A673 (cell line): ENCODE measurements at regions of chr19 and their contacts with region 1.

Region 1: DNA sequence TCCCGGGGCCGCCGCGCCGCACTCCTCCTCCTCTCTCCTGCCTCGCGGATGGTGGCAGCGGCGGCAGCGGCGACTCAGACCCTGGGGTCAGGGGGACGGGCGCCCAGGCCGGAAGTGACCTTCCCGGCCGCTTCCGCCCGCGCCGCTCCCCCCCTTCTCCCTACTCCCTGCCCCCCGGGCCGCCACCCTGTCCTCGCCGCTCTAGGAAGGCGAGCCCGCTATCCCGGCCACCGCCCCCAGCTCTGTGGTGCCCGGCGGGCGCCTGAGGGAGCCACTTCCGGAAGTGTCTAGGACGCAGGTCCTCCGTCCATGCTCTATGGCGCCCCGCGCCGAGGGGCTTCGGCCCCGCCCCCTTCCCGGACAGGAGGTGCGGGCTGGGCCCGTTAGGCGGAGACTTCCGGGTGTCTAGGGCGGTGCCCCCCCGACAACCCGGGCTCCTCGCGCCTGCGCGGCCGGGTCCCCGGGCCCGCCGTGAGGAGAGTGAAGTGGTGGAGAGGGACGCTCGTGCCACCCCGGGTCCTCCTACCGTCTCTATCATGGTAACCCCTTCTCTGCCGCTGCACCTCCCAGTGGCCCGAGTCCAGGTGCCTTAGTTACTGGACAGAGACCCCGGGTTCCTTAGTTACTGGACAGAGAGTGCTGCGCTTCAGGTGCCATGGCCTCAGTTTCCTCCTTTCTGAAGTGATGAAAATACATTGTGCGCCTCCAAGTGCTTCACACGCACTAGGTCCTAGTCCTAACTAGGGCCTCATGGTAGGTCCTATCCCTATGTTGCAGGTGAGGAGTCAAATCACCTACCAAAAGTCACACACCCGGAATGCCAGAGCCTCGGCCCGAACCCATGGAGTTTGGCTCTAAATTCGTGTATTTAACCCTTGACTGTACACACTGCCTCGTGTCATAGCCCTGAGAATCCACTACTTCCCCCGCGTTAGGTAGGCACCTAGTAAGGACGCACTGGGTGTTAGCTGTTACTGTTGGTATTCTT is at the start of gene ZNF787:
- DNase-seq: peak; percentile 99
- H3K4me3 ChIP-seq: peak within 1 kb of the TSS; percentile 97
- H3K27ac ChIP-seq: peak within 1 kb of the TSS; percentile 98
- H3K4me1 ChIP-seq: peaks cover 10% of the 10 kb centered on the region
- H3K27me3 ChIP-seq: no peaks in the 10 kb centered on the region
- CTCF ChIP-seq: no peak
- total RNA-seq, gene ZNF787: 48.6 and 51.0 TPM in 2 replicates

Region 2: GRCh38 chr19:55503502-55504251 is 617.8 kb before region 1 on chr19:
- CTCF ChIA-PET with region 1: no interaction called
- POLR2A ChIA-PET with region 1: no interaction called
- intact Hi-C with region 1: no loop called
- DNase-seq: peak; percentile 90
- H3K4me3 ChIP-seq: no peak overlapping the region
- H3K27ac ChIP-seq: no peak overlapping the region
- H3K4me1 ChIP-seq: no peaks in the 10 kb centered on the region
- H3K27me3 ChIP-seq: no peaks in the 10 kb centered on the region
- CTCF ChIP-seq: peak; percentile 97

Region 3: DNA sequence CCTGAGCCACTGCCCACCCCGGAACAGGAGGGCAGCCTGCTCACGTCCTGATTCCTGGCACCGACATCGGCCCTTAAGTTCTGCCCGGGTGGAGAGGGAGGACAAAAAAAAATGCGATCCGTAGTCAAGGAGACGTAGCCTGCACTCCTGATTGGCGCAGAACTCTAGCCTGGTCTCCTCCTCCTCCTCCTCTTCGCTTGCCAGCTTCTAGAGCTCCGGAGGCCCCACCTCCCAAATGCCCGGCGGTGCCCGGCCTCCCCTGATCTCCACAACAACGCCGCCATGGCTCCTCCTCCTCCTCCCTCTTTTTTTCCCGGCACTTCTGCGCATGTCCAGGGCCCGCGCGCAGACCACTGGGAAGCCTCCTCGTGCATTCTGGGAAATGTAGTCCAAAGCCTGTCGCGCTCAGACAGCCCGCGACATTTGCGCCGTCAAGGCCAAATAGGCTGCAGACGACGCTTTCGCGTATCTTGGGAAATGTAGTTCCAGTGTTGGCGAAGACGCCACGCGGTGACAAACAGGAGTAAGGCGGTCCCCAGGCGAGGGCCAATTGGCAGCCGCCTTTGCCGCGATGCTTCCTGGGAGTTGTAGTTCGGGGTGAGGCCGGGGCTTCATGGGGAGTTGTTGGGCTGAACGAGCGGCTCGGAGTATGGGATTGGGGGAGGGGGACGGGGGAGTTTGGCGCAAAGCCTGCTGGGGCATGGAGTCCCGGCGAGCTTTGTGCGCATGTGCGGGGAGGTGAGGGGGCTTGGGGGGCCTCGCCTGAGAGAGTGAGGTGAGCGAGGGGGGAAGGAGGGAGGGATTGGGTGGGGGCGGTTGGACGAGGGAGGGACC is 19.3 kb after region 1 on chr19 and contains the start of gene ZNF444:
- CTCF ChIA-PET with region 1: no interaction called
- POLR2A ChIA-PET with region 1: interaction called, 4 read pairs
- intact Hi-C with region 1: loop called (anchors 2 kb)
- DNase-seq: peak; percentile 99
- H3K4me3 ChIP-seq: peak within 1 kb of the TSS; percentile 53
- H3K27ac ChIP-seq: peak within 1 kb of the TSS; percentile 90
- H3K4me1 ChIP-seq: peaks cover 6% of the 10 kb centered on the region
- H3K27me3 ChIP-seq: no peaks in the 10 kb centered on the region
- CTCF ChIP-seq: no peak
- total RNA-seq, gene ZNF444: 44.2 and 45.3 TPM in 2 replicates

Region 4: DNA sequence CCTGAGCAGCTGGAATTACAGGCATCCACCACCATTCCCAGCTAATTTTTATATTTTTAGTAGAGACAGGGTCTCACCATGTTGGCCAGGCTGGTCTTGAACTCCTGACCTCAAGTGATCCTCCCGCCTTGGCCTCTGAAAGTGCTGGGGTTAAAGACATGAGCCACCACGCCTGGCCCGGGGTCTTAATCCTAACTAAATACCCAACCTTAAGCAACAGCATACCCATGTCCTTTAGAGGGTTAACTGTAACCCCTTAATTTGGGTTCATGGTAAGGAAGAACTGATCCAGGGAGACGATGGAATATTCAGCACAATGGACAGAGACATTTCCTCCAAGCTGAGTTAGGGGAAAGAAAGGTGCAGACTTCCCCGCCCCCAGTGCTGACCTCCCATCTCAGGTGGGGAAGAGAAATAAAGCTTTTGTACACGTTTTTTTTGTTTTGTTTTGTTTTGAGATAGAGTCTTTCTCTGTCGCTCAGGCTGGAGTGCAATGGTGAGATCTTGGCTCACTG is 45.6 kb after region 1 on chr19:
- CTCF ChIA-PET with region 1: no interaction called
- POLR2A ChIA-PET with region 1: no interaction called
- intact Hi-C with region 1: no loop called
- DNase-seq: peak; percentile 36
- H3K4me3 ChIP-seq: no peak overlapping the region
- H3K27ac ChIP-seq: no peak overlapping the region
- H3K4me1 ChIP-seq: no peaks in the 10 kb centered on the region
- H3K27me3 ChIP-seq: no peaks in the 10 kb centered on the region
- CTCF ChIP-seq: no peak

Region 5: GRCh38 chr19:56577719-56578602 is 456.5 kb after region 1 on chr19:
- CTCF ChIA-PET with region 1: no interaction called
- POLR2A ChIA-PET with region 1: no interaction called
- intact Hi-C with region 1: no loop called
- DNase-seq: no peak
- H3K4me3 ChIP-seq: no peak overlapping the region
- H3K27ac ChIP-seq: no peak overlapping the region
- H3K4me1 ChIP-seq: no peaks in the 10 kb centered on the region
- H3K27me3 ChIP-seq: no peaks in the 10 kb centered on the region
- CTCF ChIP-seq: no peak